ENCODE measurements at regions of chr2 and their contacts with region 1.

Region 1: DNA sequence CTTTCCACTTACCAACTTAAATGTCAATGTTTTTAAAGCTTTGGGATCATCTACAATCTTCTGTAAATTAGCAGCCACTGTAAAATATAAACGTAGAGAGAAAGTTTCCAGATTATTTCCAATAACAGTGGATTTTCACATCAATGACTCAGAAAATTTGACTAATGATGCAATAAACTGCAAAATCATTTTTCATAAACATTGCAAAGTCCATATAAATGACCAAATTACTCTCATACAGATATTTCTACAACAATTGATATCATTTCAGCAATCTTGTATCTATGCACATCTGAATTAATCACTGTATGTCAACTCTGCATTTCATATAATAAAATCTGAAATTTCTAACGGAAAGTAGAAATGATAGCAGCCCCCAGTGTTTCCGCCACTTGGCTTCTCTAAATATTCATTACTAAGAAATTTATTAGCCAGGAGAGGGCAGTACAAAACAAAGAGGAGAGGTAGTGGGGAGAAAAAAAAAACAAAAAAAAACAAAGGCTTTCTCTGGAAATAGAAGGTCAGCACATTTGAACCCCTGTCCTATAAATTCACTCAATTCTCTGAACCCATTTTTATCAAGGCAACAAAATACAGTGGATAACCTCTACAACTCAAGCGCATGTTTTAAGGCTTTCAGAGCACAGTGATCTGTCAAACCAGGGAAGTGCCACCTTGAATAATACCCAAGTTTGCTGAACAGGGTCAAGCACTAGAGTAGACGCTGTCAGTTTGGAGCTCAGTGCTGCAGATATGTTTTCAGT is 282.6 kb downstream of the STK39 start:
- DNase-seq: peak; percentile 21
- H3K4me3 ChIP-seq: no peak overlapping the region
- H3K27ac ChIP-seq: no peak overlapping the region
- H3K4me1 ChIP-seq: no peaks in the 10 kb centered on the region
- CTCF ChIP-seq: peak; percentile 80

Region 2: GRCh38 chr2:167916756-167917155 is 48.1 kb before region 1 on chr2:
- CTCF ChIA-PET with region 1: no interaction called
- POLR2A ChIA-PET with region 1: no interaction called
- intact Hi-C with region 1: no loop called
- DNase-seq: no peak
- H3K4me3 ChIP-seq: no peak overlapping the region
- H3K27ac ChIP-seq: no peak overlapping the region
- H3K4me1 ChIP-seq: no peaks in the 10 kb centered on the region
- CTCF ChIP-seq: no peak

Region 3: GRCh38 chr2:168107322-168107721 is 142.5 kb after region 1 on chr2:
- CTCF ChIA-PET with region 1: no interaction called
- POLR2A ChIA-PET with region 1: no interaction called
- intact Hi-C with region 1: loop called (anchors 1 kb)
- DNase-seq: no peak
- H3K4me3 ChIP-seq: no peak overlapping the region
- H3K27ac ChIP-seq: no peak overlapping the region
- H3K4me1 ChIP-seq: no peaks in the 10 kb centered on the region
- CTCF ChIP-seq: no peak

Measured in OCI-LY7 (cell line).